Activated CD4-positive, alpha-beta T cell treated with anti-CD3 and anti-CD28 coated beads, Interleukin-2, amount 10 ng/mL, durations not matched to agents 7 days and 5 days (primary cell): ENCODE measurements at regions of chr19 and their contacts with region 1.

Region 1: DNA sequence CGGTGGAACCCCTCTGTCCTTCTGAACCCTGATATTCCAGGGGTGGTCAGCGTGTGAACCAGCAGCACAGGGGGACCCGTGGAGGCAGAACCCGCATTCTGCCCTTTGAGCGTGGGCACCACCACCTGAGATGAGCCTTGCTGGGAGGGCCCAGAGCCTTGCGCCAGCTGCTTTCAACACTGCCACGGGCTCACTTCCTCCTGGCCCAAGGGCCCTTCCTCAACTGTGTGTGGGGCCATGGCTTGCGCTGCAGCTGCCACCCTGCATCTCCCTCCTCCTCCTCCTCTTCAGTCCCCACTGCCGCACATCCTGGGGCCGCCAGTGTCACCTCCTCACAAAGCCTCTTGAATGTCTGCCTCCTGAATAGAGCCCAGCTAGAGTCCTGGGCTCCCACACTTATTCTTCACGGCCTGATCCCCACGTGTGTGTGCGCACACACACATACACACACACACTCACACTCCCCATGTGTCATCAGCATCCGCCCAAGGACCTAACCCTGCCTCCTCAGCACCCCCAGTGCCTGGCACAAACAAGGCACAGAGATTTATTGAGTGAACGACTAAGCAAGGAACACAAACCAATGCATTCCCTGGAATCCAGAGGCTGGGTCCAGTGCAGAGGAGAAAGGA is 26.9 kb upstream of the TMEM160 start:
- DNase-seq: no peak
- H3K4me3 Mint-ChIP-seq: no peak overlapping the region
- H3K27ac Mint-ChIP-seq: peak overlapping the region; percentile 1
- H3K4me1 Mint-ChIP-seq: peaks cover 10% of the 10 kb centered on the region
- H3K27me3 Mint-ChIP-seq: no peaks in the 10 kb centered on the region

Region 2: DNA sequence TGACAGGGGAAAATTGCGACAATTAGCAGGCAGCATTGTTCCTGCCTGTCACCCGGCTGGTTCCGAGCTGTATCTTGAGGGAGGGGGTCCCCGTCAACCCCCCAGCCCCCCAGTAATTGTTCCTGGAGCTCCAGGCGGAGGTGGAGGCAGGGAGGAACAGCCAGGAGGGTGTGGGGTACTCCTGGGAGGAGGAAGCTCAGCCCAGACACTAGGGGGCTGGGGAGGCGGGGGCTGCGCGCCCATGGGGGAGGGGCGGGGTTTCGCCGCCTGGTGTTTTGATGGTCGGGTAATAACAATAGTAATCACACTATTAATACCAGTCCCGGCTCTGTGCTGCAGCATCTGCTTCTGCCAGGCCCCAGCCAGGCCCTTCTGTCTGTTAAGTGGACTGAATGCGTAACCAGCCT is 47.1 kb before region 1 on chr19:
- CTCF ChIA-PET with region 1: no interaction called
- POLR2A ChIA-PET with region 1: no interaction called
- DNase-seq: no peak
- H3K4me3 Mint-ChIP-seq: no peak overlapping the region
- H3K27ac Mint-ChIP-seq: no peak overlapping the region
- H3K4me1 Mint-ChIP-seq: peaks cover 2% of the 10 kb centered on the region
- H3K27me3 Mint-ChIP-seq: peaks cover 50% of the 10 kb centered on the region

Region 3: DNA sequence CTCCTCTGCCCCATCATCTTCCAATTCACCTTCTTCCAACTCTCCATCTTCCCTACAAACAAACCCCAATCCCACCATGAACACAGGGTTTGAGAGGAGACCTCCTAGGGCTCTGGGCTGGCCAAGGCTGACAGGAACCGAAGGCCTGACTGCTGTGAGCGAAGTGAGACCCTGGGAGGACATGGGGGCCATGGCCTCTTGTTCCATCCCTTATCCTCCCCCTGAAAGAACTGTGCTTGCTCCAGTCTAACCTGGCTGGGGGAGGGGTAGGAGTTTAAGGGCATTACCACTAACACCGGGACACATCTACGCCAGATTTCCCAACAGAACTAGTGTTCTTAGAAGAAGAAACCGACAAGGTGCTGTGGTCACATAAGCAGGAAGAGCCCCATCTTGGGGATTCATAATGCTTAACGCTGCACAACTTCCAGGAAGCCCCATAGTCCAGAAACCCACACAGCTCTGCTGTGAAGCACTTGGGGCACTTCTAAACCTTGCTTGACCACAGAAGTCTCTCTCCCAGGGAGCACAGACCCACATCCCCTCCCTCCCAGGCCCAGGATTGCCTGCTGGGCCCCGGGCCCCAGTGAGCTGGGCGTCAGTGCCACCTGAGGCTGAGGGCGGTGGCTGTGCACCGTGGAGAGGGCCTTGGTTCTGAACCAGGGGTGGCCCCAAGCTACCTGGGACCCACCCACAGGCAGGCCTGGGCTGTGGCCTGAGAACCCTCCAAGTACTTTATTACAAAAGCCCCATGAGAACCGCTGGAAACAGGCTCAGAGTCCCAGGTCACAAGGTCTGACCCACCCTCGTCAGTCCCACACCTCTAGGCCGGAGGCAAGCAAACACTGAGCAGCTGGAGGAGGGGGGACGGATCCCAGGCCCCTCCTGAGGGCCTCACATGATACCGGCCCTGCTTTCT is 19.5 kb after region 1 on chr19:
- CTCF ChIA-PET with region 1: interaction called, 10 read pairs
- POLR2A ChIA-PET with region 1: no interaction called
- DNase-seq: peak; percentile 53
- H3K4me3 Mint-ChIP-seq: peak overlapping the region; percentile 69
- H3K27ac Mint-ChIP-seq: peak overlapping the region; percentile 90
- H3K4me1 Mint-ChIP-seq: peaks cover 73% of the 10 kb centered on the region
- H3K27me3 Mint-ChIP-seq: no peaks in the 10 kb centered on the region

Region 4: GRCh38 chr19:47124937-47125668 is 49.8 kb after region 1 on chr19:
- CTCF ChIA-PET with region 1: interaction called, 13 read pairs
- POLR2A ChIA-PET with region 1: no interaction called
- DNase-seq: no peak
- H3K4me3 Mint-ChIP-seq: no peak overlapping the region
- H3K27ac Mint-ChIP-seq: no peak overlapping the region
- H3K4me1 Mint-ChIP-seq: peaks cover 7% of the 10 kb centered on the region
- H3K27me3 Mint-ChIP-seq: peaks cover 2% of the 10 kb centered on the region

Region 5: DNA sequence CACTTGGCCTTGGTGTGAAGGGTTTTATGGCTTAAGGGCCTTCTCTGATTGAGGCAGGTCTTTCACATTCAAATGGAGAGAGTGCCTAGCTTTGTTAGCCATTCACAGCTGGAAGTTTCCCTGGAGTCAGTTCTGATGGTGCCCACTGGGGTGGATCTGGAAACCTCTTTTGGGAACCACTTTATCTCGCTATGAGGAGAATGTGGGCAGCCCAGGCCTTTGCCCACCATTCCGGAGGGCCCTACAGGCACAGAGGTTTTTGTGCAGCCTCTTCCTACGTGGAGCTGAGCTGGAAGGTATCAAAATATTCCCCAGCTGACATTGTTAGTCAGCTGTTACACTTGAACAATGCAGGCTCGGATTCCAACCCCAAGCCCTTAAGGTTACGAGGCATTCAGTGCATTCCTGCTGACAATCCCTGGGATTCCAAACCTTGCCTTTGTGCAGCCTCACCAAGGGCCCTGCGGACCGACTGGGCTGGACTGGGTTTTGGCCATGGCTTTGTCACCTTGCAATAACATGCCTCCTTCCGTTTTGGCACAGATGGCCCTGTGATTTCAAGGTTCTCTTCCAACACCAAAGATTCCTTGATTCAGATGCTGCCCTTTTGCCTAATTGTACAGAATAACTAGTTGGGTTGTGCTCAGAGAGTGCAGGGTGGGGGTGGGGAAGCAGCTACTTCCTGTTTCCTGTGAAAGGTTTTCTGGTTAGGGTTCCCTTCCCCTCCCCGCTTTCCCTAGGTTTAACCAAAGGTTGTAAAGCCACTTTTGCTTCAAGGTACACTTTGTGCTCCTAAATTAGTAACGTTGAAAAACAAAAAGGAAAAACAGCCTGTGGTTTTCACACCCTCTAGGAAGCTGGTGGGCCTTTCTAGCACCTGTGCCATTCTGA is 82.4 kb after region 1 on chr19:
- CTCF ChIA-PET with region 1: interaction called, 10 read pairs
- POLR2A ChIA-PET with region 1: no interaction called
- DNase-seq: peak; percentile 60
- H3K4me3 Mint-ChIP-seq: peak overlapping the region; percentile 55
- H3K27ac Mint-ChIP-seq: peak overlapping the region; percentile 85
- H3K4me1 Mint-ChIP-seq: peaks cover 62% of the 10 kb centered on the region
- H3K27me3 Mint-ChIP-seq: no peaks in the 10 kb centered on the region